HAP-1 (cell line): ENCODE measurements at regions of chrX and their contacts with region 1.

Region 1: DNA sequence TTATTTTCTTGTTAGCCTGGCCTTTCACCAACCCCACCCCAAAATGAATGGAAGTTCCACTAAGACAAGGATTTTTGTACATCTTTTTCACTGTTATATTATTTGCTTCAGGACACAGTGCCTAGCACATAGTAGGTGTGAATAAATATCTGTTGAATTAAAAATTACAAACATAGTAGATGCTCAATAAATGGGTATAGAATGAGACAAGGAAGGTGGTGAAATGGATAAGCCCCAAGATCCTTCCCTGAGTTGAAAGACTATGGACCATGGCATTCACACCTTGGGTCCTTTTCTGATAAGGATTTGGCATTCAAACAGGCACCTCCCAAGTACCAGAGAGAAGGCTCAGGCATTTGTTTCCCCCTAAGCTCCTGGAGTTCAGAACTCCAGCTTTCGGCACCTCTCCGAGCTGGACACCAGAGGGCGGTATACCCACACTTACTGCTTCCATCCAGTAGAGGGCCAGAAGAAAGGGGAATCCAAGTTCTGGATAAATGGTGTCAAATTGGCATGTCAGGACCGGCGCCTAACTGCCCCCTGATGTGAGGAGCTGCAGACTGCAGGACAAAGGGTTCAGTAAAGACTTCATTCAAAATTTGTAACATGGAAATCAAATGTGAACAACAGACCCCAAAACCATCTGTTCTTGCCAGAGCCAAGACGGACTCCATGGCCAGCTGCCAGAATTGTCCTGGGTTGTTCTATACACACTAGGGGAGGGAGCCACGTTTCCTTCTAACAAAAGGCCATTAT is 193.0 kb downstream of the GPC3 start:
- DNase-seq: peak; percentile 93 to 94
- H3K4me3 ChIP-seq: no peak overlapping the region
- H3K4me1 ChIP-seq: peaks cover 30% of the 10 kb centered on the region
- H3K27me3 ChIP-seq: no peaks in the 10 kb centered on the region

Region 2: GRCh38 chrX:133120406-133120805 is 672.0 kb before region 1 on chrX:
- in situ Hi-C with region 1: no loop called
- DNase-seq: no peak
- H3K4me3 ChIP-seq: no peak overlapping the region
- H3K4me1 ChIP-seq: peaks cover 21% of the 10 kb centered on the region
- H3K27me3 ChIP-seq: no peaks in the 10 kb centered on the region

Region 3: DNA sequence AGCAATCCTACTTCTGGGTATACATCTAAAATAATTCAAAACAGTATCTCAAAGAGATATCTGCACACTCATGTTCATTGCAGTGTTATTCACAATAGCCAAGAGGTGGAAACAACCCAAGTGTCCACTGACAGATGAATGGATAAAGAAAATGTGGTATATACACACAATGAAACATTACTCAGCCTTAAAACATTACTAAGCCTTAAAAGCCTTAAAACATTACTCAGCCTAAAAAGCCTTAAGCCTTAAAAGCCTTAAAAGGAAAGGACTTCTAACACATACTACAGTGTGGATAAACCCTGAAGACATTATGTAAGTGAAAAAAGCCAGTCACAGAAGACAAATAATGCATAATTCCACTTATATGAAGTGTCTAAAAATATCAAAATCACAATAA is 533.9 kb before region 1 on chrX:
- in situ Hi-C with region 1: no loop called
- DNase-seq: peak in 1 of 2 experiments; percentile 4
- H3K4me3 ChIP-seq: no peak overlapping the region
- H3K4me1 ChIP-seq: peaks cover 25% of the 10 kb centered on the region
- H3K27me3 ChIP-seq: no peaks in the 10 kb centered on the region

Region 4: DNA sequence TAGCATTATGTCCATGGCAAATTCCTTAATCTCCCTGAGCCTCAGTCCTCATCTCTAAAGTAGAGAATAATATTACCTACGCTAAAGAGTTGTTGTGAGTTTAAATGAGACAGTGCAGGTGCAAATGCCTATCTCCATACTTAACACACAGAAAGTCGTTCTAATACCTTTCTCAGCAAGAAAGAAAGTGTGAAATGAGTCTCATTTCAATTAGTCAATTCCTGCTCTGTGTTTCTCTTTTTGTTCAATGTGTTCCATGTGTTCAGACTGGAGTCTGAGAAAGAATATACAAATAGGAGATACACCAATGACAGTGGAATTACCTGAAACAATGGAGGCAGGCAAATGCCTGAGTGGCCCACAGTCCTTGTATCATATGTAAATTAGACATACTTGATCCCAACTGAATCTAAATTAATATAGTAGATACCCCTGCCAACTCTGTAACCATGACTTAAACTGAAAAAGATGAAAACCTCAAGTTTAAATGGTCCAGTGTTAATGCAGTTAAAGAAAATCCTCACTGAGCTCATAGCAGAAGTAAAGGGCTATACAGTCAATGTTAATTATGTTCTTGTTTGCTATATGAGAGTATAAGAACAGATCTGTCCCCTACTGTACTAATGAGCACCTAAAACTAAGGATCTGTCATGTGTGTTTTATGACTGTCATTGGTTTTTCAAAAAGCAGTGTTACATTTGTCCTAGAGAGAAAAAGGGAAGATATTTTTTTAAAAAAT is 124.8 kb after region 1 on chrX:
- in situ Hi-C with region 1: loop called (anchors 5 kb)
- DNase-seq: no peak
- H3K4me3 ChIP-seq: no peak overlapping the region
- H3K4me1 ChIP-seq: peaks cover 34% of the 10 kb centered on the region
- H3K27me3 ChIP-seq: no peaks in the 10 kb centered on the region